ENCODE measurements at regions of chr11 and their contacts with region 1.

Region 1: GRCh38 chr11:3412837-3413236 is 33.9 kb upstream of the ZNF195 start:
- DNase-seq: no peak
- ATAC-seq: no peak
- H3K4me3 ChIP-seq: no peak overlapping the region
- H3K4me3 Mint-ChIP-seq: no peak overlapping the region
- H3K27ac ChIP-seq: no peak overlapping the region
- H3K27ac Mint-ChIP-seq: no peak overlapping the region
- H3K4me1 ChIP-seq: no peaks in the 10 kb centered on the region
- H3K4me1 Mint-ChIP-seq: peaks cover 0 to 11% (median 6%) of the 10 kb centered on the region in 7 donors
- H3K27me3 ChIP-seq: no peaks in the 10 kb centered on the region
- H3K27me3 Mint-ChIP-seq: no peaks in the 10 kb centered on the region

Region 2: DNA sequence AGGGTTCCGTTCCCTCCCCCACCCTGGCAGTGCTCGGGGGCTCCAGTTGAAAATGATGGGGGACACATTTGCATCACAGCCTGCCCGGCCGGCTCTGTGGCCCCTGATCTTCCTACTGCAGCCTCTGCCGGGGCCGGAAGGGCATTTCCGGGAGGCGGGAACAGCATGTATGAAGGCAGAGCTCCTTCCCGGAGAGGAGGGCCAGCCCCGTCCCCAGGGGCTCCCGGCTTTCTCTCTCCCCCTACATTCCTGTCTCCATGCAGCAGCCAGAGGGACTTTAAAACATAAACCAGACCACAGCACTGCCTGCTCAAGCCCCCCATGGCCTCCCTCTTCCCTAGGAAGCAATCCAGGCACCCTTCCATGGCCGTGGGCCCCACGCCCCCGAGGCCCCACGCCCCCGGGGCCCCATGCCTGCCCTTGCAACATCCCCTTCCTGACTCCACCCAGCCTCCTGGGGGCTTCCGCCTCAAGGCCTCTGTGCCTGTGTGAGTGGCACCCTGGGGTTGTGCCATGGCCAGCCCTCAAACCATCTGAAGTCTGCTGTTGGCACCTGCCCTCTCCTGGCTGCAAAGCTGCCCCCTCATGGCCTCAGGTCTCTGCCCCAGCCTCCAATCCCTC is 600.4 kb before region 1 on chr11:
- CTCF ChIA-PET with region 1: no interaction called
- POLR2A ChIA-PET with region 1: no interaction called
- intact Hi-C with region 1: no loop called
- DNase-seq: no peak
- ATAC-seq: peak; percentile 48
- H3K4me3 ChIP-seq: no peak overlapping the region
- H3K4me3 Mint-ChIP-seq: peak overlapping the region in 3 of 10 donors; percentile 11 to 62 (median 24)
- H3K27ac ChIP-seq: no peak overlapping the region
- H3K27ac Mint-ChIP-seq: no peak overlapping the region
- H3K4me1 ChIP-seq: no peaks in the 10 kb centered on the region
- H3K4me1 Mint-ChIP-seq: peaks cover 14 to 48% (median 33%) of the 10 kb centered on the region in 7 donors
- H3K27me3 ChIP-seq: no peaks in the 10 kb centered on the region
- H3K27me3 Mint-ChIP-seq: peaks cover 0 to 4% (median 0%) of the 10 kb centered on the region in 5 donors

Region 3: GRCh38 chr11:3341298-3341697 is 71.5 kb before region 1 on chr11:
- CTCF ChIA-PET with region 1: interaction called, 38 read pairs
- POLR2A ChIA-PET with region 1: no interaction called
- intact Hi-C with region 1: no loop called
- DNase-seq: peak; percentile 12 to 65 (median 51)
- ATAC-seq: peak; percentile 42
- H3K4me3 ChIP-seq: no peak overlapping the region
- H3K4me3 Mint-ChIP-seq: no peak overlapping the region
- H3K27ac ChIP-seq: no peak overlapping the region
- H3K27ac Mint-ChIP-seq: no peak overlapping the region
- H3K4me1 ChIP-seq: no peaks in the 10 kb centered on the region
- H3K4me1 Mint-ChIP-seq: no peaks in the 10 kb centered on the region
- H3K27me3 ChIP-seq: no peaks in the 10 kb centered on the region
- H3K27me3 Mint-ChIP-seq: peaks cover 21 to 46% (median 34%) of the 10 kb centered on the region in 5 donors

Region 4: DNA sequence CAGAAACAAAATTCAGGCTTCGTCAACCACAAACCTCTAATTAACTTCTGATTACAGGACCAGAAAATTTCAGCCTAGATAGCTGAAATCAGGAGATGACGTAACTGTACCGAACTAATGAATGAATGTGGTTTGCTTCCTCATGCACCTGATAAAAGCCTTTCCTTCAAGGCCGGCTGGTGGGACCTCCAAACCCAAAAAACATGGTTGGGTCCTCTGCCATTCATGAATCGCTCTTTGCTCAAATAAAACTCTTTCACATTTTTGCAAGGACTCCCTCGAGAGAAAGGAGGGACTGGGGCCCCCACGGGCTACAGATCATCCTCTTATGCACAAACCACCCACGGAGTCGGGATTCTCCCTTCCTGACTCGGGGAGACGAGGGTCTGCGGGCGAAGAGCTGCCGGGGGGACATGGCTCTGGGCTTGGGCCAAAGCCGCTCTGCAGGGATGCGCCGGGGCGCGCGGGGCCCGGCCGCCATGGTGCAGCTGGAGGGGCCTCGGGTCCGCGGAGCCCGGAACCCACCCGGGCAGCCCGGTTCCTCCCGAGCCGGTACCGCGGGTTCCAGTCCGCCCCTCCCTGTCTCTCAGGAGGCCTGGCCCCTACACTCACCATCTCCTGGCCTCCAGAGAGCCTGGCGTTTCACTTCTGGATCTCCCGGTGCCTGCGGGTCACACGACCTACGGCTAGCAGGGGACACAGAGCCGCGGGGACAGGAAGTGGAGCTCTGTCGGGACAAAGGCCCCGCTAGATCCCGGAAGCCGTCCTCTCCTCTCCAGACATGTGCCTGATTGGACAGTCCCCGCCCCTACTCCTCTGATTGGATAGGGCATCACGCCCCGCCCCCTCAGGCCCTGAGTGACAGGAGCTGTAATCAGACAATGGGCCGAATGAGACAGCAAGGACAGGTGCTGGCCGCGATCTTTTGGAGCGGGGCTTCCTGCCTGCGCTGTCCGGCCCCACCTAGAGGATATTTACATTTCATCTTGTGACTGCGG is 34.1 kb before region 1 on chr11 and contains the start of gene ZNF195:
- CTCF ChIA-PET with region 1: interaction called, 13 read pairs
- POLR2A ChIA-PET with region 1: no interaction called
- intact Hi-C with region 1: no loop called
- DNase-seq: peak; percentile 91 to 97 (median 95)
- ATAC-seq: peak; percentile 100
- H3K4me3 ChIP-seq: peak within 1 kb of the TSS; percentile 96
- H3K4me3 Mint-ChIP-seq: peak within 1 kb of the TSS; percentile 95 to 100 (median 98)
- H3K27ac ChIP-seq: peak within 1 kb of the TSS; percentile 90
- H3K27ac Mint-ChIP-seq: peak within 1 kb of the TSS; percentile 93 to 98 (median 98)
- H3K4me1 ChIP-seq: peaks cover 17 to 23% of the 10 kb centered on the region in 2 donors
- H3K4me1 Mint-ChIP-seq: peaks cover 30 to 67% (median 61%) of the 10 kb centered on the region in 7 donors
- H3K27me3 ChIP-seq: no peaks in the 10 kb centered on the region
- H3K27me3 Mint-ChIP-seq: no peaks in the 10 kb centered on the region
- total RNA-seq, gene ZNF195: 18.4 to 39.0 (median 33.7) TPM

Measured in naive thymus-derived CD4-positive, alpha-beta T cell (primary cell).